K562 (cell line): ENCODE measurements at regions of chr3 and their contacts with region 1.

Region 1: DNA sequence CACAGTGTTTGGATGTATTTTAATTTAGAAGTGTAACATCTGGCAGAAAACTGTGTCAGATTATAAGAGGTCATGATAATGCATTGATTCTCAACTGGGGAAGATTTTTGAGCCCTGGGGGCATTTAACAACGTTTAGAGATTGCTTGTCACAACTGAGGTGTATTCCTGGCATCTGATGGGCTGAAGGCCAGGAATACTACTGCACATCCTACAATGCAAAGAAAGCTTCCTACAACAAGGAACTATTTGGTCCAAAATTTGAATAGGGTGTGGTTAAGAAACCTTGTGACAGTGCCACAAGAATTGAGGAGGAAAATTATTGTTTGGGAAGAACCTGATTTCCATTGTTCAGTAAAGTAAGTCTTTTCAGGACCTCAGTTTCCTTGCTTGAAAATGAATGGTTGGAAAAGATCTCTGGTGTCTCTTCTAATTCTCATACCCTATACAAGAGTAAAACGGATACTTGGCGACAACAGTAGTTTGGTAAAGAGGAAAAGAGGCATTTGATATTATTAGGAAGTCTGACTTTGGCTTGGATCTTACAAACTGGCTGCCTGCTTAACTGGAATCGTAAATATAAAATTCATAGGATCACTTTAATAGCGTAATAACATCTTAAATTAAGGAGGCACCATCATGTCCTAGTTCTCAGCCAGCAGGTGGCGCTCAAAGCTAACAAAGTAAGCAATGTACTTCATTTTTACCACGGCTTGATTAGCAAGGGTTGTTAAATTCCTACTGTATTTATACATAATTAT is 4.3 kb downstream of the DAZL start:
- DNase-seq: peak; percentile 59 to 85 (median 61)
- ATAC-seq: peak; percentile 88
- H3K4me3 ChIP-seq: no peak overlapping the region
- H3K27ac ChIP-seq: no peak overlapping the region
- H3K4me1 ChIP-seq: peaks cover 0 to 6% of the 10 kb centered on the region in 2 experiments; a peak in 1 of 5 replicates
- H3K27me3 ChIP-seq: 0 out of 5 replicates have a peak, but pooled peaks cover 0 to 2% of the 10 kb centered on the region in 2 experiments
- CTCF ChIP-seq: peak; percentile 65 to 93 (median 76)
- EP300 ChIP-seq: no peak
- POLR2A ChIP-seq: no peak
- RAD21 ChIP-seq: peak; percentile 93 to 94

Region 2: GRCh38 chr3:16048435-16049318 is 552.3 kb before region 1 on chr3:
- CTCF ChIA-PET with region 1: no interaction called
- POLR2A ChIA-PET with region 1: no interaction called
- in situ Hi-C with region 1: no loop called
- intact Hi-C with region 1: no loop called
- DNase-seq: peak; percentile 70 to 75 (median 74)
- ATAC-seq: peak; percentile 99
- H3K4me3 ChIP-seq: no peak overlapping the region
- H3K27ac ChIP-seq: no peak overlapping the region
- H3K4me1 ChIP-seq: no peaks in the 10 kb centered on the region
- H3K27me3 ChIP-seq: peaks cover 0 to 11% of the 10 kb centered on the region in 2 experiments; a peak in 2 of 5 replicates
- CTCF ChIP-seq: peak; percentile 82 to 89 (median 84)
- EP300 ChIP-seq: no peak
- POLR2A ChIP-seq: no peak
- RAD21 ChIP-seq: peak; percentile 94 to 95

Region 3: DNA sequence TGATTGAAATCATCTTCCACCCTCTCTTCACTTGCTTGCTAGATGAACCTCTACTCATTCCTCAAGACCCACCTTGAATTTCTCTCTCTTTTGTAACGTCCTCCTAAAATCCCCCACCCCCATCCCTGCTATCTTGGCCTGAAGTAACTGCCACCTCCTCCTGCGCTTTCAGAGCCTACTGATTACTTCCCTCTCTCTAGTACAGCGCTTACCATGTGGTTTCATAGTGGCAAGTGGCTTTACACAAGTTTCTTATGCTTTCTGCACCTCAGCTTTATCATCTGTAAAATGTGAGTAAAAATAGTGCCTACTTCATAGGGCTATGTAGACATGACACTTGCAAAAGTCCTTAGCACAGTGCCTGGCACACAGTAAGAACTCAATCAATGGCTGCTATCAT is 33.0 kb after region 1 on chr3:
- CTCF ChIA-PET with region 1: no interaction called
- POLR2A ChIA-PET with region 1: no interaction called
- in situ Hi-C with region 1: no loop called
- intact Hi-C with region 1: no loop called
- DNase-seq: no peak
- ATAC-seq: no peak
- H3K4me3 ChIP-seq: no peak overlapping the region
- H3K27ac ChIP-seq: no peak overlapping the region
- H3K4me1 ChIP-seq: no peaks in the 10 kb centered on the region
- H3K27me3 ChIP-seq: no peaks in the 10 kb centered on the region
- CTCF ChIP-seq: no peak
- EP300 ChIP-seq: no peak
- POLR2A ChIP-seq: no peak
- RAD21 ChIP-seq: no peak

Region 4: DNA sequence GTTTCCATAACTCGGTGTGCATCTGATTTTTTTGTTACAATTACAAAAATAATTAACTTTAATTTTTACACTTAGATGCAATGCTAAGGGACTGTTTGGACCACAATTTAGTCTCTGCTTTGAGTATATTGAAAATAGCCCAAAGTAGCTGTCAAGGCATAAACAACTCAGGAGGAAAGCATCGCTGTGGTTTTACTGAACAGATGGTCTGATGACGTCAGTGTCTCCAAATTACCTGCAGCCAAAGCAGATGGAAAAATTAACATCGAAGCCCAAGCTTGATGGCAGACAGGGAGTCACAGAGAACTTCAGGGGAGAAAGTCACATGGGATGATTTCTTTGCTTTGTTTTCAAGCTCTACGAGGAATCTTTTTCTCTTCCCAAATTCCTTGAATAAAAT is 200.7 kb after region 1 on chr3:
- CTCF ChIA-PET with region 1: no interaction called
- POLR2A ChIA-PET with region 1: no interaction called
- in situ Hi-C with region 1: no loop called
- intact Hi-C with region 1: no loop called
- DNase-seq: no peak
- ATAC-seq: no peak
- H3K4me3 ChIP-seq: no peak overlapping the region
- H3K27ac ChIP-seq: no peak overlapping the region
- H3K4me1 ChIP-seq: no peaks in the 10 kb centered on the region
- H3K27me3 ChIP-seq: no peaks in the 10 kb centered on the region
- CTCF ChIP-seq: no peak
- EP300 ChIP-seq: no peak
- POLR2A ChIP-seq: no peak
- RAD21 ChIP-seq: no peak

Region 5: DNA sequence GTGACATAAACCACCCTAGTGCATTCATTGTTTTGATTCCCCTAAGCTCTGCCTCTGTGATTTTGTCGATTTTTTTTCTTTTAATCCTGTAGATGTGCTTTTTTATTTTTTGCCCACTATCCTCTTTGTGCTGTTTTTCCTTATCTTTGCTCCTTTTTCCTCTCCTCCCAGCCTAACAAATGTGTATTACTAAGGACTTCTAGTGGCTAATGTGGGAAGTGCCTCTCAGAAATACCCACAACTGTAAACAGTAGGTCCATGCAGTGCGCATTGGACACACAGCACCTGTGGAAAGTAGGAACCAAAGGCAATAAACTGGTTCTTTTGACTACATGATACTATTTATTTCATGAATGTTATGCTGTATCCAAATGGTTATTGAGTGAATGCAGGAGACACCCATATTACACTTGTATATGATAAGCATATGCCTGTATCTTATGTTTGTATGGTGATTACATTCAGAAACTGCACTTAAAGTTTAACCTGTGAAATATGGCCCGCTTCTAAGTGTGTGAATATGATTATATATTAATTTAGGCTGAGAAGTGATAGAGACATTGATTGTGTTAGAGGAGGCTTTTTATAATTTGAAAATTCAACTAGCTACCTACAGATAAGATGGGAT is 431.6 kb after region 1 on chr3:
- CTCF ChIA-PET with region 1: interaction called, 15 read pairs
- POLR2A ChIA-PET with region 1: no interaction called
- in situ Hi-C with region 1: no loop called
- intact Hi-C with region 1: loop called (anchors 1 kb)
- DNase-seq: peak; percentile 19 to 47 (median 32)
- ATAC-seq: peak; percentile 92
- H3K4me3 ChIP-seq: no peak overlapping the region
- H3K27ac ChIP-seq: no peak overlapping the region
- H3K4me1 ChIP-seq: no peaks in the 10 kb centered on the region
- H3K27me3 ChIP-seq: peaks cover 0 to 11% of the 10 kb centered on the region in 2 experiments; a peak in 3 of 5 replicates
- CTCF ChIP-seq: peak; percentile 35 to 70 (median 70)
- EP300 ChIP-seq: no peak
- POLR2A ChIP-seq: no peak
- RAD21 ChIP-seq: peak; percentile 64 to 76

Region 6: DNA sequence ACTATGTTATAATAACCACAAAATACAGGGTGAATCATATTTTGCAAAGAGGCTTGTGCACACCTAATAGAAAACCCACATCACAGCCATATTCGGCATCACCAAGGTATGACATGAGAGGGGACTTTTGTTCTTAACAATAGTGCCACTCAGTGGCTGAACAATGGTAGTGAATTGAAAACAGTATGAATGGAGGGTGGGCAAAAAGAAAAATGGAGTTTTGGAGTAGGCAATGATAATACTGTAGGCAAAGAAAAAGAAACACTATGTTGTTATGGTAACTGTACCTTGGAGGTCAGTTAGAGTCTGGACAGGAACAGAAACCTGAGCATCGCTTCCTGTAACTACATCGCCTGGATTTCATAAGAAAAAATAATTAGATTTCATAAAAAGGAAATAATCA is 632.4 kb after region 1 on chr3:
- CTCF ChIA-PET with region 1: interaction called, 31 read pairs
- POLR2A ChIA-PET with region 1: no interaction called
- in situ Hi-C with region 1: loop called (anchors 10 kb)
- intact Hi-C with region 1: loop called (anchors 1 kb)
- DNase-seq: peak; percentile 39 to 67 (median 52)
- ATAC-seq: peak; percentile 94
- H3K4me3 ChIP-seq: no peak overlapping the region
- H3K27ac ChIP-seq: no peak overlapping the region
- H3K4me1 ChIP-seq: no peaks in the 10 kb centered on the region
- H3K27me3 ChIP-seq: no peaks in the 10 kb centered on the region
- CTCF ChIP-seq: peak; percentile 68 to 83 (median 73)
- EP300 ChIP-seq: no peak
- POLR2A ChIP-seq: no peak
- RAD21 ChIP-seq: peak; percentile 86 to 91

Region 7: DNA sequence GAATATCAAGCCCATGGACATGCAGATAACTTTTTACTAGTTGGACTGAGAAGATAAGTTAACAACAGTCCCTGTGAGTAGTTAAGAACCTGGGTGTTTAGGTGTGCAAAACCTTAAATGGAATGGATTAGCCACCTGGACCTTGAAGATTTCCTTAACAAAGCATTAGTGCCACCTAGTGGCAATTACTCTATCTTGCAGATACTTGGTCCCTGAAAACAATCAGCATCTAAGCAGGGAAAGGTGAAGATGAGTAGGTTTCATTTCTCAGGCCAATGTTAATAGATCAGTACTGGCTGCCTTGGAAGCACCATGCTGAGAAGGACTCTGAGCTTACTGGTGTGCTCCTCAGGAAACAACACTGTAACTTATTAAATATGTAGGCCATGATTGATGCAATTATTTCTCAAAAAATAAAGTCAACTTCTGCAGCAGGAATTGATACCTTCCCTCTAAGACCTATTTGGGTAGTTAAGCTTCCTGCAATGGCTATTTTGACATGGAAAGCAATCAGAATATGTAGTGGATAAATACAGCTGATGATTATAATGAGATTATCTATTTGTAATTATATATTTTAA is 812.1 kb after region 1 on chr3:
- CTCF ChIA-PET with region 1: interaction called, 12 read pairs
- POLR2A ChIA-PET with region 1: no interaction called
- in situ Hi-C with region 1: loop called (anchors 10 kb)
- intact Hi-C with region 1: loop called (anchors 1 kb)
- DNase-seq: peak; percentile 46 to 75 (median 54)
- ATAC-seq: peak; percentile 97
- H3K4me3 ChIP-seq: no peak overlapping the region
- H3K27ac ChIP-seq: no peak overlapping the region
- H3K4me1 ChIP-seq: no peaks in the 10 kb centered on the region
- H3K27me3 ChIP-seq: no peaks in the 10 kb centered on the region
- CTCF ChIP-seq: peak; percentile 69 to 91 (median 80)
- EP300 ChIP-seq: no peak
- POLR2A ChIP-seq: no peak
- RAD21 ChIP-seq: peak; percentile 94